ENCODE measurements at regions of chr2 and their contacts with region 1.

Region 1: GRCh38 chr2:26088032-26088643 is 54.3 kb downstream of the RAB10 start:
- DNase-seq: peak; percentile 37
- H3K4me3 ChIP-seq: no peak overlapping the region
- H3K27ac ChIP-seq: no peak overlapping the region
- H3K4me1 ChIP-seq: no peaks in the 10 kb centered on the region
- H3K27me3 ChIP-seq: no peaks in the 10 kb centered on the region
- CTCF ChIP-seq: peak; percentile 56 to 63
- POLR2A ChIP-seq: no peak

Region 2: DNA sequence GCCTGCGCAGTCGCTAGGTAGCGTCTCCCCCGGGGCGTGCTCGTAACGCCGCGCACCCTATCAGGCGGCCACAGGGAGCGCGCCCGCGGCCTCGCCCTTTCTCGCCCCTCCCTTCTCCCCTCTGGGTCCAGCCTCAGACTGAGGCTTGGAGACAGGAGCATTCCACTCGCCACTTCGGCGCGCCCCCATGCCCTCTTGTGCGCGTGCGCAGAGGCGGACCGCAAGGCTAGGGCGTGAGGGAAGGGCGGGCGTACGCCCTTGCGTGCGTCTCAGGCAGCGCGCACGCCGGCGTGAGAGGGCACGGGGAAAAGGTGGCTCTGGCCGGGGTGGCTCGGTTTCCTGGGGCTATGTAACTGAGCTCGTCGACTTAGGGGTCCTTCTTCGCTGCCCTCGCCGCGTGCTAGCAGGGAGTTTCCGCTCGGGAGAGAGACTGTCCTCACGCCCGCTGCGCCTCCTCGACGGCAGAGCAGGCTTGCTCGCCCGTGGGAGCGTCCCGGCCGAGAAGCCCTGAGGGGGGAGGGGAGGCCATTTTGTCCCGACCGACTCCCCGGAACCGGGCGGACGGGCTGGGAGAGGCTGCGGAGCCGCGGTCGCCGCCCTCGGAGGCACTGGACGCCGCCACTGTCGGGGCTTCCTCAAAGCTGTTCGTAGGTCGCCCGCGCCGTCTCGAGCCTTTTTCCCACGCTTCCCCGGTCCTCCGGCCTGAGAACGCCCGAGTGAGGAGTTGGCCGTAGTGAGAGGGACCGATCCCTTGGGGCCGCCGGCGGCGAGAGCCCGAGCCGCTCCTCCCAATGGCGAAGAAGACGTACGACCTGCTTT is 54.1 kb before region 1 on chr2 and contains the start of gene RAB10:
- CTCF ChIA-PET with region 1: interaction called, 11 read pairs
- POLR2A ChIA-PET with region 1: no interaction called
- dilution Hi-C with region 1: no loop called
- intact Hi-C with region 1: no loop called
- DNase-seq: peak; percentile 100
- H3K4me3 ChIP-seq: peak within 1 kb of the TSS; percentile 90 to 97 (median 92)
- H3K27ac ChIP-seq: peak within 1 kb of the TSS; percentile 72
- H3K4me1 ChIP-seq: peaks cover 11% of the 10 kb centered on the region
- H3K27me3 ChIP-seq: no peaks in the 10 kb centered on the region
- CTCF ChIP-seq: no peak
- POLR2A ChIP-seq: peak; percentile 94
- total RNA-seq, gene RAB10: 104 and 105 TPM in 2 replicates

Region 3: GRCh38 chr2:26075963-26076605 is 12.1 kb before region 1 on chr2:
- CTCF ChIA-PET with region 1: interaction called, 34 read pairs
- POLR2A ChIA-PET with region 1: no interaction called
- dilution Hi-C with region 1: no loop called
- intact Hi-C with region 1: no loop called
- DNase-seq: no peak
- H3K4me3 ChIP-seq: no peak overlapping the region
- H3K27ac ChIP-seq: no peak overlapping the region
- H3K4me1 ChIP-seq: no peaks in the 10 kb centered on the region
- H3K27me3 ChIP-seq: no peaks in the 10 kb centered on the region
- CTCF ChIP-seq: no peak
- POLR2A ChIP-seq: no peak

Region 4: DNA sequence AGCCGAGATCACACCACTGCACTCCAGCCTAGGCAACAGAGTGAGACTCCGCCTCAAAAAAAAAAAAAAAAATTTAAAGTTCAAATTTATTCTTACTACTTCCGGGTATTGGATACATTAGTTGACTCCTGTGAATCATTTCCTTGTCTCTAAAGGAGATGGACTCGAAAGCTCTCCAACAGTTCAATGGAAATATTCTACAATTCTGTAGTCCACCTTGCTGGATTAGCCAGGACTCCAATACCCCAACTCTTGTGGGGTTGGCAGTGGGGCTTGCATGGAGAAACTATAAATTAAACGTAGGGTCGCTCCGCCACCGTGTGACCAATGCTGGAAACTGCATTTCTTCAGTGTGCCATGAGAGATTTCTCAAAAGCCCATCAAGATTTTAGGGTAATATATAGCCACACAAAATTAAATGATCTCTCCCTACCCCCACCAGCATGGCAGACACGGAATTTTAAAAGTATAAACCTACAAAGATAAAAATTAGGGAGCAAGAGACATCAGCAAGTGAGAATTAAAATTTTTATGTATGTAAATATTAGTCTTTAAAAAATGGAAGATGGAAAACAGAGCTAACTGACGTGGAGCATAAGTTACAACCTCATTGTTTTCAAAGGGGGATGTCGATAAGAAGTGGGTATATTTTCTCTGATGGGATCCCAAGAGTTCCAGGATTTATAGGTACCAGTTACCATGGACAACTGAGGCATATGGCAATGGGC is 57.0 kb after region 1 on chr2:
- CTCF ChIA-PET with region 1: interaction called, 29 read pairs
- POLR2A ChIA-PET with region 1: no interaction called
- dilution Hi-C with region 1: no loop called
- intact Hi-C with region 1: loop called (anchors 1 kb)
- DNase-seq: peak; percentile 74
- H3K4me3 ChIP-seq: no peak overlapping the region
- H3K27ac ChIP-seq: no peak overlapping the region
- H3K4me1 ChIP-seq: peaks cover 11% of the 10 kb centered on the region
- H3K27me3 ChIP-seq: peaks cover 0 to 2% of the 10 kb centered on the region in 2 experiments
- CTCF ChIP-seq: peak; percentile 59 to 61
- POLR2A ChIP-seq: no peak

Region 5: DNA sequence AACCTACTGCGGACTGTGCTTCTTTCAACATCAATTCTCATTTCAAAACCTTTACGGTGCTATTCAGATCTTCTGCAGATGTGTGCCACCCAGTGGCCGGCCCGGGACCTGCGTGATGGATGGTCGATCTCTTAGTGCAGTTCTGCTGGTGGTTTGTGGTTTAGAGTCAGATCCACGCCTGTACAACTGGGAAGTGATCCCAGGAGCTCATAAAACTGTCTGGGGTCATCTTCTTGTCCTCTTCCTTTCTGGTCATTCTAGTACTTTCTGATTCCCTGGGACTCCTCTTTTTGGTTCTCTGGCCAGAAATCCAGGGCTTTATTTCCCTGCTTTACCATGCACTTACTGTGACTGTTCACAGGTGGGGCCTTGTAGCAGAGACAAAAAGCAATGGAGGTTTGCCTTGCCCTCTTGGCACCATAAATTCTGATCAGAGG is 242.0 kb after region 1 on chr2:
- CTCF ChIA-PET with region 1: interaction called, 5 read pairs
- POLR2A ChIA-PET with region 1: no interaction called
- dilution Hi-C with region 1: no loop called
- intact Hi-C with region 1: loop called (anchors 1 kb)
- DNase-seq: peak; percentile 81
- H3K4me3 ChIP-seq: no peak overlapping the region
- H3K27ac ChIP-seq: no peak overlapping the region
- H3K4me1 ChIP-seq: no peaks in the 10 kb centered on the region
- H3K27me3 ChIP-seq: peaks cover 4 to 9% of the 10 kb centered on the region in 2 experiments
- CTCF ChIP-seq: peak; percentile 83 to 90
- POLR2A ChIP-seq: no peak

Measured in endothelial cell of umbilical vein (primary cell).